ENCODE measurements at regions of chr20 and their contacts with region 1.

Region 1: GRCh38 chr20:64062596-64063388 is at the start of gene TCEA2:
- DNase-seq: peak; percentile 93
- ATAC-seq: peak; percentile 83
- H3K4me3 ChIP-seq: peak within 1 kb of the TSS in 4 of 5 experiments; percentile 63 to 79 (median 70)
- H3K4me3 Mint-ChIP-seq: peak within 1 kb of the TSS; percentile 88
- H3K27ac ChIP-seq: peak within 1 kb of the TSS; percentile 34 to 69
- H3K27ac Mint-ChIP-seq: peak within 1 kb of the TSS; percentile 86
- H3K4me1 ChIP-seq: peaks cover 54 to 63% of the 10 kb centered on the region in 2 donors
- H3K4me1 Mint-ChIP-seq: peaks cover 52% of the 10 kb centered on the region
- H3K27me3 ChIP-seq: no peaks in the 10 kb centered on the region
- H3K27me3 Mint-ChIP-seq: no peaks in the 10 kb centered on the region
- CTCF ChIP-seq: no peak
- total RNA-seq, gene TCEA2: 49.3 and 58.1 TPM in 2 replicates

Region 2: GRCh38 chr20:63457737-63458136 is 605.1 kb before region 1 on chr20:
- CTCF ChIA-PET with region 1: no interaction called
- POLR2A ChIA-PET with region 1: no interaction called
- intact Hi-C with region 1: no loop called
- DNase-seq: no peak
- ATAC-seq: peak; percentile 44
- H3K4me3 ChIP-seq: no peak overlapping the region
- H3K4me3 Mint-ChIP-seq: no peak overlapping the region
- H3K27ac ChIP-seq: no peak overlapping the region
- H3K27ac Mint-ChIP-seq: no peak overlapping the region
- H3K4me1 ChIP-seq: peaks cover 7 to 16% of the 10 kb centered on the region in 2 donors
- H3K4me1 Mint-ChIP-seq: peaks cover 11% of the 10 kb centered on the region
- H3K27me3 ChIP-seq: peaks cover 0 to 19% (median 6%) of the 10 kb centered on the region in 4 experiments
- H3K27me3 Mint-ChIP-seq: peaks cover 27% of the 10 kb centered on the region
- CTCF ChIP-seq: no peak

Region 3: GRCh38 chr20:63707549-63708300 is 355.1 kb before region 1 on chr20 and contains the starts of genes ARFRP1 and ZGPAT:
- CTCF ChIA-PET with region 1: no interaction called
- POLR2A ChIA-PET with region 1: no interaction called
- intact Hi-C with region 1: loop called (anchors 5 kb)
- DNase-seq: peak; percentile 92
- ATAC-seq: peak; percentile 96
- H3K4me3 ChIP-seq: peak within 1 kb of the TSS in 4 of 5 experiments; percentile 63 to 80 (median 67)
- H3K4me3 Mint-ChIP-seq: peak within 1 kb of the TSS; percentile 87
- H3K27ac ChIP-seq: peak within 1 kb of the TSS; percentile 63 to 85
- H3K27ac Mint-ChIP-seq: peak within 1 kb of the TSS; percentile 86
- H3K4me1 ChIP-seq: peaks cover 21 to 28% of the 10 kb centered on the region in 2 donors
- H3K4me1 Mint-ChIP-seq: peaks cover 38% of the 10 kb centered on the region
- H3K27me3 ChIP-seq: no peaks in the 10 kb centered on the region
- H3K27me3 Mint-ChIP-seq: no peaks in the 10 kb centered on the region
- CTCF ChIP-seq: no peak
- total RNA-seq, gene ARFRP1: 73.3 and 75.5 TPM in 2 replicates
- total RNA-seq, gene ZGPAT: 46.1 and 47.5 TPM in 2 replicates

Region 4: DNA sequence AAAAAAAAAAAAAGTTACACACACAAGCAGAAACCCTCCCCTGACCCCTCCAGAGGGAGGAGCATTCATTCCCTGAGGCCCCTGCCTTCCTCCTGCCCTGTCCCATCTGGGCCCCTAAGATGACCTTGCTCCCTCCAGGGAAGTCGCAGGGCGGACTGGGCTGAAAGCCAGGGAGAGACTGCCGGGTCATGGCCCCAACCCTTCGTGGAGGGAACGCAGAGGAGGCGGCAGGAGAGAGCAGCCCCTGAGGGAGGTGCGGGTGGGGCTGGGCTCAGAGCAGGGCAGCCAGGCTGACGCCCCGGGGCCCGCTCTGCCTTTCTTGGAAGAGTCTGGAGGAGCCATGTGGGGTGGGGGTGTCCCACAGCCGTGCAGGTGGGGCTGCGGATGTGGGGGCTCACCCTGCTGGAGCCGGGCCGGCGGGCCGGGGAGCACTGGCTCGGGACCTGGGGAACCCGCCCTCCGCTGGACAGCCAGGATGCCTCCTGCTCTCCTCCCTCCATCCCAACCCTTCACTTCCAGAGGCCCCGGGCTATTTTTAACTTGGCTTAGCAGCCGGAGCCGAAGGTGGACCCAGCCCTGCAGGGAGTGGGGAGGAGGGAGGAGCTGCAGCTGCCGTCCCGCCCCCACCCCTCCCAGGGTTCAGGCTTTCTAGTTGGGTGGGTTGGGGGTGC is 216.5 kb before region 1 on chr20:
- CTCF ChIA-PET with region 1: no interaction called
- POLR2A ChIA-PET with region 1: no interaction called
- intact Hi-C with region 1: no loop called
- DNase-seq: peak; percentile 30
- ATAC-seq: no peak
- H3K4me3 ChIP-seq: no peak overlapping the region
- H3K4me3 Mint-ChIP-seq: no peak overlapping the region
- H3K27ac ChIP-seq: no peak overlapping the region
- H3K27ac Mint-ChIP-seq: no peak overlapping the region
- H3K4me1 ChIP-seq: peaks cover 36 to 57% of the 10 kb centered on the region in 2 donors
- H3K4me1 Mint-ChIP-seq: peaks cover 25% of the 10 kb centered on the region
- H3K27me3 ChIP-seq: peaks cover 0 to 67% (median 21%) of the 10 kb centered on the region in 4 experiments
- H3K27me3 Mint-ChIP-seq: peaks cover 31% of the 10 kb centered on the region
- CTCF ChIP-seq: no peak

Region 5: GRCh38 chr20:63980806-63981728 is 81.7 kb before region 1 on chr20 and contains the start of gene PRPF6:
- CTCF ChIA-PET with region 1: interaction called, 11 read pairs
- POLR2A ChIA-PET with region 1: interaction called, 4 read pairs
- intact Hi-C with region 1: loop called (anchors 1 kb)
- DNase-seq: peak; percentile 96
- ATAC-seq: peak; percentile 72
- H3K4me3 ChIP-seq: peak within 1 kb of the TSS; percentile 63 to 85 (median 79)
- H3K4me3 Mint-ChIP-seq: peak within 1 kb of the TSS; percentile 90
- H3K27ac ChIP-seq: peak within 1 kb of the TSS; percentile 69 to 87
- H3K27ac Mint-ChIP-seq: peak within 1 kb of the TSS; percentile 94
- H3K4me1 ChIP-seq: peaks cover 30 to 46% of the 10 kb centered on the region in 2 donors
- H3K4me1 Mint-ChIP-seq: peaks cover 53% of the 10 kb centered on the region
- H3K27me3 ChIP-seq: no peaks in the 10 kb centered on the region
- H3K27me3 Mint-ChIP-seq: no peaks in the 10 kb centered on the region
- CTCF ChIP-seq: peak; percentile 86
- total RNA-seq, gene PRPF6: 79.7 and 82.9 TPM in 2 replicates

Region 6: GRCh38 chr20:64101731-64102621 is 39.2 kb after region 1 on chr20:
- CTCF ChIA-PET with region 1: interaction called, 4 read pairs
- POLR2A ChIA-PET with region 1: no interaction called
- intact Hi-C with region 1: loop called (anchors 1 kb)
- DNase-seq: peak; percentile 84
- ATAC-seq: peak; percentile 32
- H3K4me3 ChIP-seq: peak overlapping the region in 4 of 5 experiments; percentile 24 to 59 (median 55)
- H3K4me3 Mint-ChIP-seq: peak overlapping the region; percentile 92
- H3K27ac ChIP-seq: peak overlapping the region in 1 of 2 donors; percentile 89
- H3K27ac Mint-ChIP-seq: peak overlapping the region; percentile 95
- H3K4me1 ChIP-seq: peaks cover 27 to 43% of the 10 kb centered on the region in 2 donors
- H3K4me1 Mint-ChIP-seq: peaks cover 38% of the 10 kb centered on the region
- H3K27me3 ChIP-seq: peaks cover 0 to 21% (median 5%) of the 10 kb centered on the region in 4 experiments
- H3K27me3 Mint-ChIP-seq: no peaks in the 10 kb centered on the region
- CTCF ChIP-seq: peak; percentile 84